Left ventricle myocardium superior (tissue), 1 donor: ENCODE measurements at regions of chr19 and their contacts with region 1.

Region 1: DNA sequence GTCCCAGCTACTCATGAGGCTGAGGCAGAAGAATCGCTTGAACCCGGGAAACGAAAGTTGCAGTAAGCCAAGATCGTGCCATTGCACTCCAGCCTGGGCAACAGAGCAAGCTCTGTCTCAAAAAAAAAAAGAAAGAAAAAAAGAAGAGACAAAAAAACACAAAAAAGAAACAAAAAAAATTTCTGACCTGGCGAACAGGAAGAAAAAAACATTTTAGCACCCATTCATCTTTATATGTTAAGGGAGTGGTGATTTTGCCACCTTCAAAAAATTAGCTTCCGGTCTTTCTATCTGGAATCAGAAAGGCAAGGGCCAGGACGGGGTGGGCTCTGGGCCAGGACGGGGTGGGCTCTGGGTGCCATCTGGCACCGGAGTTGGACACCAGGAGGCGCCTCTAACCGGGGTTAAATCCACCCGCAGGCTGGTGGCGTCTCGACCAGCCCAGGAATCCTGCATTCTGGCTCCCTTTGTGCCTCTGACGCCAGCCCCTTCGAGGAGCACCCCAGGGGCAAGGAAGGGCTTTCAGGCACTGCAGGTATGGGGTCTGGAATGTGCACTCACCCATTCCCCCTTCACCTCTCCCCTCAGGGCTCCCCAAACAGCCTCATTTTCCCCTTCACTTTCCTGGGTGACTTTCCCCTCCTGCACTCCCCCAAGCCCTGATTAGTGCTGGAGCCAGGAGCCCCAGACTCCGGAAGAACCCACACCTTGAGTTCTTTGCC is 10.4 kb upstream of the ZSWIM4 start:
- DNase-seq: peak; percentile 82
- ATAC-seq: peak; percentile 66

Region 2: GRCh38 chr19:13846557-13847406 is 61.9 kb after region 1 on chr19:
- intact Hi-C with region 1: no loop called
- DNase-seq: peak; percentile 92
- ATAC-seq: peak; percentile 64

Region 3: DNA sequence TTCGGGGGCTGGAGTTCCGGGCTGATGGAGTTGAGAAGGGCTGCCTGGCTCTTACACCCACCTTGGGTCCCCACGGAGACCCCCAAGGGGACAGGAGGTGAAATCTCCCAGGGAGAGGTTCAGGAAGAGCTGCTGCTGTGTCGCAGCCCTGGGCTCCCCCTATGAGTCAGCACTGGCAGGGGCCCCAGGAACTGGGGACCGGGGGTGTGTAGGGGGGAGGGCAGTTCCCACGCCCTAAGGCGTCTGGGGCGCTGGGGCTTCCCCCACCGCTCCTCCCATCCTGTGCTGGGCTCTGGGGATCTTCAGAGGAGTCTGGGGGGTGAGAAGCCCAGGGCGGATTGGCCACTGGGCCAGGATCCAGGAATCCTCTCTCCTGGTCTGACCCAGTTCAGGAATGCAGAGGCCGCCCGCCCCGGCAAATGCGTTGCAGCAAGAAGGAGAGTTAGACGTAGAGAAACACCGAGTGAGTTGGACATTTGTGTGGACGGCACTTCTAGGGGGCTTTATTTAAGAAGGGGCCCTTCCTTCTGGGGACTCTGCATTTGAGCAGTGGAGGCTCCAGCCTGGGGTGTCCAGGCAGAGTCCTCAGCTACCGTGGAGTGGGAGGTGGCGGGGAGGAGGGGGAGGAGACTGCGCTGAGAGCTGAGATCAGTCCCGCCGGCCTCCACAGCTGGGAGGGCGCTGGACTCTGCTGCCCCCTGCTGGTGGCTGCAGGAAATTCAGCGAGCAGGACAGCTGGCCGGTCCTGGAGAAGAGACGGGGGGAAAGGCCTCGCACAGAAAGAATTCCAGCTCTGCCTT is 77.0 kb after region 1 on chr19:
- intact Hi-C with region 1: loop called (anchors 10 kb)
- DNase-seq: peak; percentile 94
- ATAC-seq: peak; percentile 94